ENCODE measurements at regions of chr15 and their contacts with region 1.

Region 1: GRCh38 chr15:92917606-92918407 is 17.7 kb downstream of the CHD2 start:
- DNase-seq: peak; percentile 95
- H3K4me3 Mint-ChIP-seq: no peak overlapping the region
- H3K27ac Mint-ChIP-seq: peak overlapping the region; percentile 44
- H3K4me1 Mint-ChIP-seq: peaks cover 88% of the 10 kb centered on the region
- H3K27me3 Mint-ChIP-seq: no peaks in the 10 kb centered on the region

Region 2: DNA sequence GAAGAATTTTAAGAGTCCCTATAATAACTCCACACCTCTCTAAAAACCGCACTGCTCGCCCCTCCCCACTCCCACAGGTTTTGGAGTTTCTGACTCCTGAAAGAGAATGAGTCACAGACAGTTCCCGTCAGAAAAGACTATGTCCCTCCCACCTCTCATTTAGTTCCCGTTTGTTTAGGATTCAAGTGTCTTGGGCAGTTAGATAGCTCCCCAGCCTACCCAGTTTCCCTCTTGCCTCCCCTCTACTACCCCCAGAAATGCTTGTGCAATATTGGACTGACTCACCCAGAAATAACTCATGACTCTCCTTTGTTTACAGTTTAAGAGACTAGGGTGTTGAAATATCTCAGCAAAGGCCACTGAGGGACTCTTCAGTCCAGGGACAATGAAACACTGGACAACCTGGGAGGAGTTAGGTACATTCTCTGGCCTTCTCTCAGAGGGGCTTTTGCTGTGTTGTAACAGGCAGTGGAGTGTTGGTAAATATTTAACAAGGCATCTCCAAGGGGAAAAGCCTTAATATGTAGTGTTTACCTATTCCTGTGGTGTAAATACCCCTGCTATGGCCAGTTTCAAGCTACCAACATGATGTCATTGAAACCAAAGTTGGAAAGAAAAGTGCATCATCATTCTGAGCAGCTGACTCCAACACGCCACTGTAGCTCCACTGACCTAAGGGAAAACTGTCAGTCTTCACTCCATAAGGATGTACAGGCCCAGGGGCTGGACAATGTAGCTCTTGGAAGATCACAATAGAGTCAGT is 113.8 kb before region 1 on chr15:
- CTCF ChIA-PET with region 1: interaction called, 112 read pairs
- POLR2A ChIA-PET with region 1: interaction called, 326 read pairs
- DNase-seq: peak; percentile 53
- H3K4me3 Mint-ChIP-seq: no peak overlapping the region
- H3K27ac Mint-ChIP-seq: peak overlapping the region; percentile 71
- H3K4me1 Mint-ChIP-seq: peaks cover 44% of the 10 kb centered on the region
- H3K27me3 Mint-ChIP-seq: no peaks in the 10 kb centered on the region

Region 3: GRCh38 chr15:92831655-92832328 is 86.0 kb before region 1 on chr15:
- CTCF ChIA-PET with region 1: interaction called, 9 read pairs
- POLR2A ChIA-PET with region 1: interaction called, 30 read pairs
- DNase-seq: peak; percentile 93
- H3K4me3 Mint-ChIP-seq: peak overlapping the region; percentile 60
- H3K27ac Mint-ChIP-seq: peak overlapping the region; percentile 94
- H3K4me1 Mint-ChIP-seq: peaks cover 53% of the 10 kb centered on the region
- H3K27me3 Mint-ChIP-seq: no peaks in the 10 kb centered on the region

Region 4: DNA sequence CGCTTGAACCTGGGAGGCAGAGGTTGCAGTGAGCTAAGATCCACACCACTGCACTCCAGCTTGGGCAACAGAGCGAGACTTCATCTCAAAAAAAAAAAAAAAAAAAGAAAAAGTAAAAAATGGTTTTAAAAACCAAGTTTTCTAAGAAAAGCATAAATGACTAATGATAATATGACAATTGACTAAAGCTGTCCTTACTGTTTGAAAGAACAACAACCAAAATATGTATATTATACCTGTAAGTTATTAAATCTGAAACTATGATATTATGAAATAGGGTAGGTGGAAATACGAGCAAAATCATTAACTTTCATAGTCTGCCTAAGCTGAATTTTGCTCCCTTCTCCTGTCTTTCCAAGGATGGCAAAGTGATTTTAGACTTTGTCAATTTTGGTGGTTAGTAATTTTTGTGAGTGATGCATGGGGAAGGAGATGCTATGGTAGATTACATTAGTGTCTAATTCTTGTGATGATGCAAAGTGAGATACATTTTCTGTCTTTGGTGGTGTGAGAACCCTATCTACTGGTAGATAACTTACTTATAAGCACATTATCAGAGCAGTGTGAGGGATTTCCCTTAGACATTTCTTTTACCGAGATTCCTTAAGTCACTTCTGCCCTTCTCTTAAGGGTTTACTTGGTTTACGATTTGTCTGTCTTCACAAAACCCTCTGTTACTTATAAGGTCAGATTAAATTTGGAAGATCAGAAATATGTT is 28.3 kb before region 1 on chr15:
- CTCF ChIA-PET with region 1: interaction called, 10 read pairs
- POLR2A ChIA-PET with region 1: interaction called, 245 read pairs
- DNase-seq: no peak
- H3K4me3 Mint-ChIP-seq: peak overlapping the region; percentile 67
- H3K27ac Mint-ChIP-seq: peak overlapping the region; percentile 82
- H3K4me1 Mint-ChIP-seq: peaks cover 70% of the 10 kb centered on the region
- H3K27me3 Mint-ChIP-seq: no peaks in the 10 kb centered on the region

Region 5: DNA sequence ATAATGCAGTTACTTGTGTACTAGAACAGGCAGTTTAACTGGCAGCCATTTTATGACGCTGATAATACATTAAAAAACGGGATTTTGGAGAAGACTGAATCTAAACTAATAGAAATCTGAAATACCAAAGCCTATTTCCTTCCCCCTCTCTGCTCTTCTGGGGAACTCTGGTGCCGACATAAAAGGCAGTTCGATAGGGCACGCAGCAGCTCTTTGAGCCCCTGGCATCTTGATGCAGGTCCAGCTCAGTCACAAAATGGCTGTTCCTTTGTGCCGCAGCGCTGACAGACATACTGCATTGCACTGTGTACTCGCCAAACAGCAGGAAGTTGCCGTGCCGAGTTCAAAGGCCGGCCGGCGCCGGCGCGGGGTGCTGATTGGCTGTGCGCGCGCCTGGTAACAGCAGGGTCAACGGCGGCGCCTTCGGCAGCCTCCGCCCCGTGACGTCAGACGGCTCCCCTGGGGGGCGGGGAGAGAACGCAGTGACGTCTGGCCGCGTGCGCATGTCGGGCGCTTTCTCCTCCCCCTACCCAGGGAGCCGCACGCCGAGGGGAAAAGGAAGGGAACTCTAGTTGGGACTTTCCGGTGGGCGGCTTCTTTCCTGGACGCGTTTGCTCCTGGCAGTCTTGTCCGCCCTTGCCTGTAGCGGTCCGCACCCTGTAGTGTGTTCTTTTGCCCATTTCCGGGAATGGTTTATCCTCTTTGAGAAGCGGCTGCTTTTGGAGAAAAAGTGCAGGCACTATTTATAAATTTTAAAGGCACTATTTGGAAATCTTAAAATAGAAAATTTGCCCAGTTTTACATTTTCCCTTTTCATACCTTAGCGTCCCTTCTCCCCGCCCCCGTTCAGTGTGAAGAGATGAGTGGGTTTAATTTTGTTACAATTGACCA is 13.6 kb before region 1 on chr15:
- CTCF ChIA-PET with region 1: interaction called, 69 read pairs
- POLR2A ChIA-PET with region 1: interaction called, 413 read pairs
- DNase-seq: peak; percentile 100
- H3K4me3 Mint-ChIP-seq: peak overlapping the region; percentile 92
- H3K27ac Mint-ChIP-seq: peak overlapping the region; percentile 100
- H3K4me1 Mint-ChIP-seq: peaks cover 55% of the 10 kb centered on the region
- H3K27me3 Mint-ChIP-seq: no peaks in the 10 kb centered on the region

Region 6: GRCh38 chr15:92954578-92954977 is 36.8 kb after region 1 on chr15:
- CTCF ChIA-PET with region 1: interaction called, 10 read pairs
- POLR2A ChIA-PET with region 1: no interaction called
- DNase-seq: no peak
- H3K4me3 Mint-ChIP-seq: no peak overlapping the region
- H3K27ac Mint-ChIP-seq: no peak overlapping the region
- H3K4me1 Mint-ChIP-seq: peaks cover 30% of the 10 kb centered on the region
- H3K27me3 Mint-ChIP-seq: no peaks in the 10 kb centered on the region

Measured in activated CD4-positive, alpha-beta memory T cell treated with anti-CD3 and anti-CD28 coated beads, Interleukin-2, amount 10 ng/mL, durations not matched to agents 7 days and 5 days (primary cell).